Sigmoid colon (tissue), 7 donors: ENCODE measurements at regions of chr14 and their contacts with region 1.

Region 1: GRCh38 chr14:88868558-88869159 is 44.2 kb downstream of the TTC8 start:
- DNase-seq: no peak
- H3K4me3 ChIP-seq: no peak overlapping the region
- H3K27ac ChIP-seq: no peak overlapping the region
- H3K4me1 ChIP-seq: no peaks in the 10 kb centered on the region
- H3K27me3 ChIP-seq: no peaks in the 10 kb centered on the region
- CTCF ChIP-seq: peak in 3 of 4 experiments; percentile 18 to 36 (median 34)
- EP300 ChIP-seq: no peak
- POLR2A ChIP-seq: no peak

Region 2: GRCh38 chr14:88667555-88668273 is 200.9 kb before region 1 on chr14:
- intact Hi-C with region 1: loop called (anchors 2 kb)
- DNase-seq: peak; percentile 69
- H3K4me3 ChIP-seq: no peak overlapping the region
- H3K27ac ChIP-seq: peak overlapping the region in 2 of 4 donors; percentile 13 to 16
- H3K4me1 ChIP-seq: peaks cover 0 to 6% (median 4%) of the 10 kb centered on the region in 4 donors
- H3K27me3 ChIP-seq: no peaks in the 10 kb centered on the region
- CTCF ChIP-seq: peak; percentile 26 to 79 (median 64)
- EP300 ChIP-seq: no peak
- POLR2A ChIP-seq: no peak